ENCODE measurements at regions of chr11 and their contacts with region 1.

Region 1: GRCh38 chr11:17014838-17015626 is 818 bp upstream of the PLEKHA7 start:
- DNase-seq: peak; percentile 86 to 89
- ATAC-seq: peak; percentile 60 to 66
- H3K4me3 ChIP-seq: peak overlapping the region; percentile 69
- H3K27ac ChIP-seq: peak overlapping the region; percentile 95
- H3K4me1 ChIP-seq: peaks cover 52% of the 10 kb centered on the region
- CTCF ChIP-seq: peak; percentile 66
- EP300 ChIP-seq: no peak
- POLR2A ChIP-seq: no peak
- RAD21 ChIP-seq: peak; percentile 38 to 40; a peak in 2 of 5 replicates

Region 2: GRCh38 chr11:17001871-17002270 is 13.2 kb before region 1 on chr11:
- CTCF ChIA-PET with region 1: interaction called, 10 read pairs
- POLR2A ChIA-PET with region 1: interaction called, 3 read pairs
- DNase-seq: no peak
- ATAC-seq: no peak
- H3K4me3 ChIP-seq: no peak overlapping the region
- H3K27ac ChIP-seq: no peak overlapping the region
- H3K4me1 ChIP-seq: peaks cover 17% of the 10 kb centered on the region
- CTCF ChIP-seq: no peak
- EP300 ChIP-seq: no peak
- POLR2A ChIP-seq: no peak
- RAD21 ChIP-seq: no peak

Region 3: DNA sequence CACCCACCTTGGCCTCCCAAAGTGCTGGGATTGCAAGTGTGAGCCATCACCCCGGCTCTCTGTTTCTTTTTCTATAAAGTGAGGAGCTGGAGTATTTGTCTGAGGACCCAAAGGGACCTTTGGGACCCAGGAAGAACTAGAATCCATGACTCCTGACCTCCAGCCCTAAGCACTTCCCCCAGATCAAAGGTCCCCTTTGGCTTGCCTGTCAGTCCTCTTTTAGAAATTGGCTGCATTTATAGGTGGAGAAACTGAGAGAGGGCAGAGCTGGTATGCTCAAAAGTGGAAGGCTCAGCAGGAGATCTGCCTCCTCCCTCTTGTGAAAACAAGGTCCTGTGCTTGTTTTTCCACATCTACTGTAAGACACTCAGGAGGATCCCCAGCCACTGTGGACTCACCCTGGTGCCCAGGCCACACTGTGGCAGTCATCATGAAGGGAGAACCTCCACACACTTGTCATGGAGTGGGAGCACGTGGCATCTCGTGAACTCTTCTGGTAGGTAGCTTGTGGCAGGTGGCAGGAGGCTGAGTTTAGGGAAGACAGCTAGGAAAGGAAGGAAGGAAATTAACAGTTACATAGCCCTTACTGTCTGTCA is 11.6 kb after region 1 on chr11:
- CTCF ChIA-PET with region 1: interaction called, 18 read pairs
- POLR2A ChIA-PET with region 1: interaction called, 3 read pairs
- DNase-seq: no peak
- ATAC-seq: peak in 1 of 2 experiments; percentile 43; a peak in 2 of 6 replicates
- H3K4me3 ChIP-seq: no peak overlapping the region
- H3K27ac ChIP-seq: no peak overlapping the region
- H3K4me1 ChIP-seq: no peaks in the 10 kb centered on the region
- CTCF ChIP-seq: no peak
- EP300 ChIP-seq: no peak
- POLR2A ChIP-seq: no peak
- RAD21 ChIP-seq: no peak

Region 4: GRCh38 chr11:17077520-17078401 is 62.7 kb after region 1 on chr11 and contains the start of gene RPS13:
- CTCF ChIA-PET with region 1: interaction called, 7 read pairs
- POLR2A ChIA-PET with region 1: interaction called, 37 read pairs
- DNase-seq: peak; percentile 98 to 99
- ATAC-seq: peak; percentile 94 to 96
- H3K4me3 ChIP-seq: peak within 1 kb of the TSS; percentile 95
- H3K27ac ChIP-seq: peak within 1 kb of the TSS; percentile 96 to 99
- H3K4me1 ChIP-seq: peaks cover 26% of the 10 kb centered on the region
- CTCF ChIP-seq: no peak
- EP300 ChIP-seq: no peak
- POLR2A ChIP-seq: peak; percentile 94
- RAD21 ChIP-seq: no peak
- polyA plus RNA-seq, gene RPS13: 943 and 1,343 TPM in 2 replicates

Measured in A549 (cell line).